ENCODE measurements at regions of chr1 and their contacts with region 1.

Region 1: DNA sequence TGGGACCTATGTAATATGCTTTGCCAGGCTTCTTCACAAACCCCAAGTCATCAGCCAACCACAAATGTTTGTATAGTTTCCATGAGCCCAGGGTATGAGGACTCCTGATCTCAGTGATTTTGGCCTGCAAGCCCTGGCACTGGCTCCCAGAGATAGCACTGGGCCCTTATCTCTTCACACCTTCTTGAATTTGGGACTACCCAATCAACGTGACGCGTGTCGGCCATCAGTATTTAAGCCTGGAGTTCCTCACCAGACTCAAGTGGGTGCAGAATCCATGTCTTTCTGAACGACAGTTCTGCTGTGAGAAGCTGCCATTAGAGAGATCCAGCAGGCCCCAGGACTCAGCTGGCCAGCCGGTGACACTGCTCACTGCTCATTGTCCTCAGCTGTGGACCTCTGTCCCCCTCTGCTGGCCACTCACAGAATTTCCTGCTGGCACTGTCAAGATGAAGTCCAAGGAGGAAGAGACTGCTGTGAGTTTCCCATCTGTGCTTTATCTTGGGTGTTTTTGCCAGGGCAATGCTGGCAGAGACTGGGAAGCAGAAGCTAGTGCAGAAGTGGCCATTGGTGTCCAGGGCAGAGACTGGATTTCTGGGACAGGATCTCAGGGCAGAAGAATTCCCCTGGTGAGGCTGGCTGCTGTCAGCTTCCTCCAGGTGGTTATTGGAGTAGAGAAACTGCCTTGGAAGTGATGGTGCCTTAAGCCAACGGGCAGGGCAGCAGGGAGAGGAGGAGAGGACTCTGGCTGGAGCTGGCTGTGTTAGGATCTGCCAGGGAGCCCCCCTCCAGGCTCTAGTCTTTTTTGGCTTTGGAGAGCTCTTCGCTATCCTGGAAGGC is 28.4 kb downstream of the TMCC2 start:
- DNase-seq: peak; percentile 96

Region 2: DNA sequence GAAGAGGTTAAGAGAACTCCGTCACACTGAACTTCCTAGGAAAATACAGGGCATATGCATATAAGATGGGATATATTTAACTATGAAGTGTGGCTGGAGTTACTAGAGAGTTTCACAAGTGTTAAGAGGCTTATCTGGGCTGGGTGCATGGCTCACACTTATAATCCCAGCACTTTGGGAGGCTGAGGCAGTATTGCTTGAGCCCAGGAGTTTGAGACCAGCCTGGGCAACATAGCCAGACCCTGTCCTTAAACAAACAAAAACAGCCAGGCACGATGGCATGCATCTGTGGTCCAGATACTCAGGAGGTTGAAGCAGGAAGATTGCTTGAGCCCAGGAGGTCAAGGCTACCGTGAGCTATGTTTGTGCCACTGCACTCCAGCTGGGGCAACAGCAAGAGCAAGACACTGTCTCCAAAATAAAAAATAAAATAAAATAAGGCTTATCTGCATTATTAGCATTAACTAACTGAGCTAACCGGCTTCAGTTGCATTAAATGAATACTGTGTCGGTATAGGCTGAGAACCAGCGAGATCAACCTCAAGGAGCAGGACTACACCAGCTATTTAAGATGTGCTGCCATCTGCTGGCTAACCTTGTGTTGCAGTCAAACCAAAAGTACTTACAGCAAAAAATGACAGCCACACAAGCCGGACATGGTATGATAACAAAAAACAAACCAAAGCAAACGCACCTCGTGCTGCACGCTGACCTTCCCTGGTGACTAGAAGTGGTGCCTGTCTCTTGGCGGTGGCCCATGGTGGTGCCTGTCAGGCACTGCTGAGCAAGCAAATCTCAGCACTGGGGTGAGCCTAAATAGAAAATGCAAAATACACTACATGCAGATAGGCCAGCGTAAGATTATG is 114.7 kb before region 1 on chr1:
- intact Hi-C with region 1: loop called (anchors 10 kb)
- DNase-seq: peak; percentile 86

Region 3: DNA sequence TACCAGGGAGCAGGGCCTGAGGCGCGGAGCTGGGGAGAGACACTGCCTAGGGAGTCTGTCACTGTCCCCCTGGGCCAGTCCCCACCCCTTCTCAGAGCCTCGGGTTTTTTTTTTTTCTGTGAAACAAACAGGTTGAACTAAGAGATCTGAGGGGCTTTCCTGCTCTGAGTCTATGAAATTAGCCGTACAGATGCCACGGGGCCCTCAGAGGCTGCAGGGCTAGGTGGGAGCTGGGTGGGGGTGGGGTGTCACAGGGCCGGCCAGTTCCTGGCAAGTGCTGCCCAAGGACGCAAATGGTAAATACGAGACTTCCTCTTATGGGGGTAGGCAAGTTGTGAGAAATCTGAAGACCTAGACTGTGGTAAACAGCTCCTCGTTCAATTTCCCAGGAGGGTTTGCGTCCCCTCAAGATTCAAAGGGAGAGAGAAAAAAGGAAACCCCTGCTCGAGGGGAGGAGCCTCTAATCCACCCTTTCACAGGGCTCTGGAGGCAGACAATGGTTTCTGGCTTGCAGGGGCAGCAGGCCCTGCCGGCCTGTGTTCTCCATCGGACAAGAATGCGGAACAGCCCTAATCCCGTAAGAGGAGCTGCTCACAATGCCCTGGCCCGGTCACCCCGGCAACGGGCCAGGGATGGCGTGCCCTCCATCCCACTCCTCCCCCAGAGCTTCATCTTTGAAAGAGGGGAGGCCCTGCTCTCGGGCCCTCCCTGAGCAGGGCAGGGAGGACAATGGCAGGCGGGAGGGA is 57.6 kb after region 1 on chr1:
- intact Hi-C with region 1: no loop called
- DNase-seq: peak; percentile 89

Region 4: DNA sequence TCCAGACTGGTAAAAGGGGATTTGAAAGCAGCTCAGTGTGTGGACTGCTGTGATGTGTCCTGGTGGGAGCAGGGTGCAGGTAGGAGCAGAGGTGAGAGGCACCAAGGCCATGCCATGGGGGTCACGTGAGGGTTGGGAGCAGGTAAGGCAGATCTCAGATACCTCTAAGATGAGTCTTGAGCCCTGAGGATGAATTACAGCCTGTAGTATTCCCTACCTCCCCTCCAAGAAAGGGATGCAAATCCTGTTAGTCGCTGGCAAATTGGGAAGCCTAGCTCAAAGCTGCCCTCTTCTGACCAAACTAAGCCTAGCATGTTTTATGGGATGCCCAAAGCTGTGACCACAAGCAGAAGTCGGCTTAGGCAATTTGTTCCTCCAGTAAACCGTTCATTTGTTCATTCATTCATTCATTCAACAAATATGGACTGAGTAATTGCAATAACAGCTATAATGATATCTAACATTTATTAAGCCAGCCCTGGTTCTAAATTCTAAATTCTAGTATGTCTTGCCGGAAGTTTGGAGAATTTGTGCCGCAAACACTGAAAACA is 69.2 kb after region 1 on chr1:
- intact Hi-C with region 1: no loop called
- DNase-seq: no peak

Measured in posterior vena cava (tissue), 2 donors.